PC-3 (cell line): ENCODE measurements at regions of chr2 and their contacts with region 1.

Region 1: GRCh38 chr2:72887754-72888437 is 688 bp downstream of the SPR start:
- DNase-seq: peak; percentile 91
- ATAC-seq: peak; percentile 64
- H3K4me3 ChIP-seq: peak overlapping the region; percentile 92
- H3K27ac ChIP-seq: peak overlapping the region; percentile 60
- H3K4me1 ChIP-seq: peaks cover 26% of the 10 kb centered on the region
- H3K27me3 ChIP-seq: no peaks in the 10 kb centered on the region
- CTCF ChIP-seq: peak; percentile 90

Region 2: DNA sequence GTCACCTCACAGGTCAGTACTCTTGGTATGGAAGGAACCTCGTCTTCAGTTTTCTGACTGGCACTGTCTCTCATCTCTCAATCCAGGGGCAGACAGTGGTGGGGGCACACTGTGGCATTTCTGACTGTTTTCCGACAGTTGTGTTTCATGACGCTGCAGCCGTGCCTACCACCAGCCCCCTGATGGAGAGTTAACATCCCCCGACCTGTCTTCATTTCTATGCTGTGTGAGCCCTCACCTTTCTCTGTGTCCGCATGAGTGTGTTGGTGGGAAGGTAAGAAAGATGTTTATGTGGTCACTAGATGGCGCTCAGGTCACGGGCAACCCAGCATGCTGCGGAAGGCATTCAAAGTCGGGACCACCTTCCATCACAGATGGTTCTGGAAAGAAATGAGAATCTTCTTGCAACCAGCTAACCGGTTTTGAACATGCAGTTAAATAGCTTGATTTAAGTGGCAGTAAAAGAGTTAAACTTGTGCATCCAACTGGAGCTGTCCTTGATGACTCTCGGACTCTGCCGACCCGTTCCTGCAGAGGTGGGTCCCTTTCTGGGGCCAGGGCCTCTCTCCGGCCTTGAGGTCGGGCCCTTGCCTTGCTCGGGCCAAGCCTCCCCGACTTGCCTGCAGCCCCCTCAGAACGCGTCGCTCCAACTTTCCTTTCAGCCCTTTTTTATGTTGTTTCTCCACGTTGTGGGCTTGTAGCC is 1342.2 kb before region 1 on chr2:
- CTCF ChIA-PET with region 1: no interaction called
- POLR2A ChIA-PET with region 1: no interaction called
- intact Hi-C with region 1: loop called (anchors 5 kb)
- DNase-seq: peak; percentile 75
- ATAC-seq: peak; percentile 93
- H3K4me3 ChIP-seq: peak overlapping the region; percentile 64
- H3K27ac ChIP-seq: no peak overlapping the region
- H3K4me1 ChIP-seq: peaks cover 9% of the 10 kb centered on the region; the same call in 1 of the 2 replicates
- H3K27me3 ChIP-seq: no peaks in the 10 kb centered on the region
- CTCF ChIP-seq: peak; percentile 95

Region 3: GRCh38 chr2:72915907-72916742 is 28.2 kb after region 1 on chr2:
- CTCF ChIA-PET with region 1: interaction called, 4 read pairs
- POLR2A ChIA-PET with region 1: no interaction called
- intact Hi-C with region 1: loop called (anchors 2 kb)
- DNase-seq: peak; percentile 58
- ATAC-seq: peak; percentile 36
- H3K4me3 ChIP-seq: peak overlapping the region; percentile 60
- H3K27ac ChIP-seq: no peak overlapping the region
- H3K4me1 ChIP-seq: peaks cover 25% of the 10 kb centered on the region; the same call in 1 of the 2 replicates
- H3K27me3 ChIP-seq: peaks cover 89% of the 10 kb centered on the region
- CTCF ChIP-seq: no peak

Region 4: GRCh38 chr2:72973566-72974435 is 85.9 kb after region 1 on chr2:
- CTCF ChIA-PET with region 1: interaction called, 5 read pairs
- POLR2A ChIA-PET with region 1: no interaction called
- intact Hi-C with region 1: loop called (anchors 1 kb)
- DNase-seq: peak; percentile 72
- ATAC-seq: peak; percentile 96
- H3K4me3 ChIP-seq: no peak overlapping the region
- H3K27ac ChIP-seq: no peak overlapping the region
- H3K4me1 ChIP-seq: no peaks in the 10 kb centered on the region
- H3K27me3 ChIP-seq: no peaks in the 10 kb centered on the region
- CTCF ChIP-seq: peak; percentile 83

Region 5: GRCh38 chr2:73163483-73164367 is 275.8 kb after region 1 on chr2:
- CTCF ChIA-PET with region 1: no interaction called
- POLR2A ChIA-PET with region 1: no interaction called
- intact Hi-C with region 1: loop called (anchors 1 kb)
- DNase-seq: peak; percentile 81
- ATAC-seq: peak; percentile 96
- H3K4me3 ChIP-seq: no peak overlapping the region
- H3K27ac ChIP-seq: no peak overlapping the region
- H3K4me1 ChIP-seq: no peaks in the 10 kb centered on the region
- H3K27me3 ChIP-seq: no peaks in the 10 kb centered on the region
- CTCF ChIP-seq: peak; percentile 85